ENCODE measurements at regions of chr14 and their contacts with region 1.

Region 1: GRCh38 chr14:65239143-65239937 is 137.0 kb upstream of the MAX start:
- DNase-seq: peak; percentile 68 to 91
- H3K4me3 ChIP-seq: peak overlapping the region; percentile 44; the same call in 1 of the 2 replicates
- H3K27ac ChIP-seq: peak overlapping the region; percentile 96
- H3K4me1 ChIP-seq: peaks cover 90% of the 10 kb centered on the region
- H3K27me3 ChIP-seq: no peaks in the 10 kb centered on the region
- CTCF ChIP-seq: no peak

Region 2: GRCh38 chr14:65131301-65131701 is 108.0 kb before region 1 on chr14:
- CTCF ChIA-PET with region 1: no interaction called
- POLR2A ChIA-PET with region 1: no interaction called
- intact Hi-C with region 1: no loop called
- DNase-seq: peak; percentile 15 to 96
- H3K4me3 ChIP-seq: no peak overlapping the region
- H3K27ac ChIP-seq: peak overlapping the region; percentile 55
- H3K4me1 ChIP-seq: no peaks in the 10 kb centered on the region; the same call in 1 of the 2 replicates
- H3K27me3 ChIP-seq: no peaks in the 10 kb centered on the region
- CTCF ChIP-seq: no peak

Region 3: DNA sequence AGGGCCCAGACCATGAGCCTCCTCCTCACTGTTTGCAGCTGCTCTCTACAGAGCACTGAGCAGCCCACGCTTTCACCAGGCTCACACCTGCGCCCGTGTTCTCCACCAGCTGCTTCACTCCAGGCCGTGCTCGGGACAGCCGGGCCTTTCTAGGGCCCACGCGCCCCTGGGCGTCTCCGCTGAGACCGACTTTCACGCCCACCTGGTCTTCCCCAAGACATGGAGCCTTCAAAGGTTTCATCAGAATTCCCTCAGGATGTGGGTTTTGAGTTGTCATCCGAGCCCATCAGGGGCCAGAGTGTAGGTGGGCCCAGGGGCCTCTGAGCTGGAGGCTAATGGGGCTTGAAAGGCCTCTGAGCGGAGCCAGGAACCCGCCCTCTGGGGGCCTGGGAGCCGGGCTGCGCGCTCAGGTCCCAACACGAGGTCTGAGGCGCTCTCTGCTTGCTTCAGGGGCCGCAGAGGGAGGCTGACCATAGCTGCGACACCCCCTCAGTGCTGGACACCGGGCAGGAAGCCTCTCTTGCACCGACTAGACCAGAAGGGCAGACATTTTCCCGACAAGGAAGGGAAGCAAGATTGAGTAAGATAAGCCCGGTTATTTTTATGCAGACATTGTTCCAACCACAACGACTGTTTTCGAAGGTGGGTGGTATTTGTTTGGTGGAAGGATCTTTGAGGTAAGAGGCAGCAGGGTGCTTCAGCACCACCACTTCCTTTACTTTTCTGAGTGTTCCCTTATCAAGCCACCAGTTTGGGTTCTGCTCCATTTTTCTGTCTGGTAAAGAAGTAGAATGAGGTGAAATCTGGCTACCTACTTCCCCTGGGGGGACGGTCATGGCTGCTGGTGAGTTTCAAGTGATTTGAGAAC is 48.2 kb after region 1 on chr14:
- CTCF ChIA-PET with region 1: interaction called, 6 read pairs
- POLR2A ChIA-PET with region 1: interaction called, 3 read pairs
- intact Hi-C with region 1: loop called (anchors 2 kb)
- DNase-seq: no peak
- H3K4me3 ChIP-seq: no peak overlapping the region
- H3K27ac ChIP-seq: no peak overlapping the region
- H3K4me1 ChIP-seq: peaks cover 29% of the 10 kb centered on the region
- H3K27me3 ChIP-seq: no peaks in the 10 kb centered on the region
- CTCF ChIP-seq: no peak